ENCODE measurements at regions of chr5 and their contacts with region 1.

Region 1: GRCh38 chr5:65577141-65577540 is 14.0 kb downstream of the PPWD1 start:
- DNase-seq: no peak
- ATAC-seq: no peak
- H3K4me3 ChIP-seq: no peak overlapping the region
- H3K4me3 Mint-ChIP-seq: no peak overlapping the region
- H3K27ac ChIP-seq: no peak overlapping the region
- H3K27ac Mint-ChIP-seq: peak overlapping the region in 1 of 2 donors; percentile 72
- H3K4me1 ChIP-seq: no peaks in the 10 kb centered on the region
- H3K4me1 Mint-ChIP-seq: peaks cover 21 to 44% (median 34%) of the 10 kb centered on the region in 3 donors
- H3K27me3 ChIP-seq: no peaks in the 10 kb centered on the region
- H3K27me3 Mint-ChIP-seq: no peaks in the 10 kb centered on the region

Region 2: GRCh38 chr5:64625678-64626077 is 951.5 kb before region 1 on chr5:
- CTCF ChIA-PET with region 1: no interaction called
- POLR2A ChIA-PET with region 1: interaction called in 1 of 2 experiments, 14 read pairs
- DNase-seq: no peak
- ATAC-seq: no peak
- H3K4me3 ChIP-seq: no peak overlapping the region
- H3K4me3 Mint-ChIP-seq: no peak overlapping the region
- H3K27ac ChIP-seq: no peak overlapping the region
- H3K27ac Mint-ChIP-seq: no peak overlapping the region
- H3K4me1 ChIP-seq: no peaks in the 10 kb centered on the region
- H3K4me1 Mint-ChIP-seq: no peaks in the 10 kb centered on the region
- H3K27me3 ChIP-seq: peaks cover 0 to 2% of the 10 kb centered on the region in 2 experiments
- H3K27me3 Mint-ChIP-seq: peaks cover 23 to 28% of the 10 kb centered on the region in 2 donors

Region 3: GRCh38 chr5:65555287-65555686 is 21.9 kb before region 1 on chr5:
- CTCF ChIA-PET with region 1: no interaction called
- POLR2A ChIA-PET with region 1: no interaction called
- DNase-seq: no peak
- ATAC-seq: no peak
- H3K4me3 ChIP-seq: no peak overlapping the region
- H3K4me3 Mint-ChIP-seq: no peak overlapping the region
- H3K27ac ChIP-seq: no peak overlapping the region
- H3K27ac Mint-ChIP-seq: no peak overlapping the region
- H3K4me1 ChIP-seq: no peaks in the 10 kb centered on the region
- H3K4me1 Mint-ChIP-seq: peaks cover 0 to 52% (median 45%) of the 10 kb centered on the region in 3 donors
- H3K27me3 ChIP-seq: no peaks in the 10 kb centered on the region
- H3K27me3 Mint-ChIP-seq: no peaks in the 10 kb centered on the region

Region 4: DNA sequence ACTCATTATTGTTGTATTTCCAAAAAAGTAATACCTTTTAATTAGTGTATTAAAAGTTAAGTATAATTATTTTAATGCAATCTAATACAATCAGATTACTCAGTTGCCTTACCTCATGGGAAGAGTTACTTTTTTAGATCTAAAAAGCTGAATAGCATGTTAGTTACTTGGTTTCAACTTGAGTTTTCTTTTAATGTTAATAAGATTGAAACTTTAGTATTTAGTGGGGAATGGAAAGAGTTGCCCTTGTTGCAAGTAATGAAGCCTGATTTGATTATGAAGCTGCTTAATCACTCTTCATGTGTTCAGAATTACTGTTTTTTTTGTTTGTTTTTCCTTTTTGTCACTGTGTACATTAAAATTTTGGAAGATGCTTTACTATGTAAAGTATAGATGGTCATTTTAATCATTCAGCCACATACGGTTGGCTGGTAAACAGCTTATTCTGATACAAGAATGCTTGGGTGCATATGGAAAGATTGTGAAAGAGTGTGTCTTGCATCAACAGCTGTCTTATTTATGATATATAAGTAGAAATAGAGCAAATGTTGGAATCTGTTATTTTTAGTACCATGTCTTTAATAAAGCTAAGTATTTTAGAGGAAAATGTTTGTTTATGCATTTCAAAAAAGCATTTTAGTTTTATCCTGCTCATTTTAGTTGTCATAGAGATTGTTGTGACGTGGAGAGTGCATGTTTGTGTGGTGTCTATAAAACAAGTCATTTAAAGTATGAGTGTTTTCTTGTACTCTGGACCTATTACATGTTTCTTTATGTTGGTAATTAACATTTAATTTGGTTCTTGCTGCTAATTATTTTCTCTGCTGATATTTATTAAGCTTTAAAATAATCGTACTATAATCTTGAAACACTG is 603.4 kb after region 1 on chr5:
- CTCF ChIA-PET with region 1: no interaction called
- POLR2A ChIA-PET with region 1: interaction called in 1 of 2 experiments, 12 read pairs
- DNase-seq: no peak
- ATAC-seq: no peak
- H3K4me3 ChIP-seq: no peak overlapping the region
- H3K4me3 Mint-ChIP-seq: no peak overlapping the region
- H3K27ac ChIP-seq: no peak overlapping the region
- H3K27ac Mint-ChIP-seq: peak overlapping the region in 1 of 2 donors; percentile 11
- H3K4me1 ChIP-seq: no peaks in the 10 kb centered on the region
- H3K4me1 Mint-ChIP-seq: peaks cover 0 to 4% (median 0%) of the 10 kb centered on the region in 3 donors
- H3K27me3 ChIP-seq: no peaks in the 10 kb centered on the region
- H3K27me3 Mint-ChIP-seq: no peaks in the 10 kb centered on the region

Measured in T-cell (primary cell).